Right ventricle myocardium superior (tissue), 1 donor: ENCODE measurements at regions of chr4 and their contacts with region 1.

Region 1: GRCh38 chr4:1346781-1347409 is at the start of gene UVSSA:
- DNase-seq: peak; percentile 100
- ATAC-seq: peak; percentile 97
- total RNA-seq, gene UVSSA: 6.7 TPM

Region 2: GRCh38 chr4:1130316-1131186 is 216.3 kb before region 1 on chr4:
- intact Hi-C with region 1: loop called (anchors 5 kb)
- DNase-seq: peak; percentile 71
- ATAC-seq: peak; percentile 97

Region 3: GRCh38 chr4:1167247-1167949 is 179.5 kb before region 1 on chr4:
- intact Hi-C with region 1: loop called (anchors 10 kb)
- DNase-seq: peak; percentile 90
- ATAC-seq: peak; percentile 90

Region 4: DNA sequence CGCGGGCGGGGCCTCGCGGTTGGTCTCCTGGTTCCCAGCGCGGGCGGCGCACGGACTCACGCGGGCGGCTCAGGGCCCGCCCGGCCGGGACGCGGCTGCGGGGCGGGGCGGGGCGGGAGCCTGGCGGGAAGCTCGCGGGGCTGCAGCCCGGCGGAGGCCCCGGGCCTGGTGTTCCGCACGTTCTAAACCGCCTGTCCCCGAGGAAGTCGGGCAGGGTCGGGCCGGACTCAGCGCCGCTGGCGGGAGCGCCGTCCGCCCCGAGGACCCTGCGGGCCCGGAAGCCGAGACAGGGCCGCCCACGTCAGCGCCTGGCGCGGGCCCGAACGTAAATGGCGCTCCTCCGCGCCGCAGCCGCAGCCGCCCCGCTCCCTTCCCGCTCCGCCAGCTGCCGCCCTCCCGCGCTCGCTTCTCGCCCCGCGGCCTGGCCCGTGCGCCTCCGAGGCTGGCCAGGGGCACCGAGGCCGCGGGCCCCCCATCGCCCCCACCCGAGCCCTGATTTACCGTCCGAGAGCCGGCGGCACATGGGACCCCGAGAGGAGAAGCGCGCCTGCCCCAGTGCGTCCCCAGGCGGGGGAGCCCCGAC is 97.7 kb before region 1 on chr4:
- intact Hi-C with region 1: loop called (anchors 5 kb)
- DNase-seq: peak; percentile 93
- ATAC-seq: peak; percentile 71

Region 5: GRCh38 chr4:1502176-1502886 is 155.4 kb after region 1 on chr4:
- intact Hi-C with region 1: no loop called
- DNase-seq: no peak
- ATAC-seq: peak; percentile 29

Region 6: DNA sequence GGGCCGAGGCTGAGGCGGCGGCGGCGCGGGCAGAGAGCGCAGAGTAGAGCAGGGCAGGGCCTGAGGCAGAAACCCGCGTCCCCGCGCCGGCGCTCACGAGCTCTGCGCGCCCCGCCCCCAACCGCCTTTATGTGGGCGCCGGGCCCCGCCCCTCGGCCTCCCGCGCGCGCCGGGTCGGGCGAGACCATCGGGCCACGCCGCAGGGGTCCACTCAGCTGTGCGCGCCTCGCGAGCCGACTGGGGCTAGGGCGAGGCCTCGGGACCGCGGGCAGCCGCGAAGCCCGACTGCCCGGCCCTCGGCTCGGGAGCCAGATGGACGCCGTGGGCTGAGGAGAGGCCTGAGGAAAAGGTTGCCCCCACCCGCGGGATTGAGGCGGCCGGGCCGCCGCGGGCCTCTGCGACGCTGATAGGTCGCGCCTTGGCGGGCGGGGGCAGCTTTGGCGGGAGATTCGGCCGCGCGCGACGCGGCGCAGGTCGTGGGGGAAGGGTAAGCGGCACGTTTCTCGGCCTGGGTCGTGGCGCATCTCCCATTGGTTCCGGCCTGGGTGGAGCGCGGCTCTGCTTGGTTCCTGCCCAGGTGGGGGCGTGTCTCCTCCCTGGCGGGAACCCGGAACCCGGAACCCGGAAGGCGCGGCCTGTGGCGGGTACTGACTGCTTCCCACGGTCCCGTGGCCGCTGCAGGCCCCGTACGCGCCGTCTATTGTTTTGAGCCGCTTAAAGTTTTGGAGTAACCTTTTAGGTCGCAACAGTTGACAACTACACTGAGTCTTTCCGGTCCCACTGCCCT is 365.5 kb after region 1 on chr4 and contains the start of gene SLBP:
- intact Hi-C with region 1: loop called (anchors 10 kb)
- DNase-seq: peak; percentile 97
- ATAC-seq: peak; percentile 93
- total RNA-seq, gene SLBP: 12.6 TPM